Activated CD4-positive, alpha-beta memory T cell treated with anti-CD3 and anti-CD28 coated beads for 36 hours (primary cell): ENCODE measurements at regions of chr1 and their contacts with region 1.

Region 1: GRCh38 chr1:28409090-28409489 is 39.5 kb downstream of the PHACTR4 start:
- DNase-seq: no peak
- H3K4me3 Mint-ChIP-seq: no peak overlapping the region
- H3K27ac Mint-ChIP-seq: no peak overlapping the region
- H3K4me1 Mint-ChIP-seq: peaks cover 2% of the 10 kb centered on the region
- H3K27me3 Mint-ChIP-seq: no peaks in the 10 kb centered on the region

Region 2: GRCh38 chr1:28470146-28470545 is 61.1 kb after region 1 on chr1:
- CTCF ChIA-PET with region 1: no interaction called
- POLR2A ChIA-PET with region 1: no interaction called
- intact Hi-C with region 1: loop called (anchors 5 kb)
- DNase-seq: no peak
- H3K4me3 Mint-ChIP-seq: no peak overlapping the region
- H3K27ac Mint-ChIP-seq: no peak overlapping the region
- H3K4me1 Mint-ChIP-seq: peaks cover 2% of the 10 kb centered on the region
- H3K27me3 Mint-ChIP-seq: no peaks in the 10 kb centered on the region

Region 3: DNA sequence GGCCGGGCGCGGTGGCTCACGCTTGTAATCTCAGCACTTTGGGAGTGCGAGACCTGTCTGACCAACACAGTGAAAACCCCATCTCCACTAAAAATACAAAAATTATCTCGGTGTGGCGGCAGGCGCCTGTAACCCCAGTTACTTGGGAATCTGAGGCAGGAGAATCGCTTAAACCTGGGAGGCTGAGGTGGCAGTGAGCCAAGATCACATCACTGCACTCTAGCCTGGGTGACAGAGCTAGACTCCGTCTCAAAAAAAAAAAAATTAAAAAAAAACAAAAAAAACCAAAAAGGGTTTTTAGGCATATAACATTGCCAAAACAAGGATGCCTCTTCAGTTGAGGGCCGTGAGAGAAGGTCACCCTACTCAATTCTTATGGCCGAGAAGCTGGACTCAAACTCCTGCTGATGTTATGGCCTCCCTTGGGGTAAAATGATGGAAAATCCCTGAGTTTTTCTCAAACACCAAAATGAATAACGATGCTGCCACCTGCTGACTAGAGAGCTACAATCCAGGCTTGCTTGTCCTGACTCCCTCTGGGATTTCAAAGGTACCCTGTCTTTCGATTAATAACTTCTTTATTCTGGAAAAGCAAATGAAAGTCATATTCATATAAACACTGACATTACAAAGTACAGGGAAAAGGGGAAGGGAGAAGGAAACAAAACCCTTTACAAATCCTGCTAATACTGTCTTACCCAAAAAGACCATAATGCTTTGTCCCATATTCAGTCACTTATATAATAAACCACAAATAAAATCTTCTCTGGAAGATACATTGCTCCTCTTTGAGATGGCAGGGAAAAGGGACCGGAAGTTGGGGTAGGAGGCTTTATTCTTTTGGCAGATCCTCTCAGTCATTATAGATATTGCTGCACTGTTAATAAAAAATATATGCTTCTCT is 193.7 kb after region 1 on chr1:
- CTCF ChIA-PET with region 1: no interaction called
- POLR2A ChIA-PET with region 1: no interaction called
- intact Hi-C with region 1: loop called (anchors 5 kb)
- DNase-seq: peak; percentile 38
- H3K4me3 Mint-ChIP-seq: no peak overlapping the region
- H3K27ac Mint-ChIP-seq: no peak overlapping the region
- H3K4me1 Mint-ChIP-seq: peaks cover 11% of the 10 kb centered on the region
- H3K27me3 Mint-ChIP-seq: no peaks in the 10 kb centered on the region